Naive thymus-derived CD4-positive, alpha-beta T cell (primary cell): ENCODE measurements at regions of chr14 and their contacts with region 1.

Region 1: GRCh38 chr14:21711360-21711961 is 37.8 kb upstream of the OR4E1 start:
- DNase-seq: peak in 5 of 9 donors; percentile 25 to 57 (median 37)
- ATAC-seq: peak; percentile 80
- H3K4me3 ChIP-seq: no peak overlapping the region
- H3K4me3 Mint-ChIP-seq: peak overlapping the region; percentile 25 to 82 (median 67)
- H3K27ac ChIP-seq: no peak overlapping the region
- H3K27ac Mint-ChIP-seq: peak overlapping the region in 7 of 9 donors; percentile 7 to 91 (median 72)
- H3K4me1 ChIP-seq: no peaks in the 10 kb centered on the region
- H3K4me1 Mint-ChIP-seq: peaks cover 0 to 8% (median 5%) of the 10 kb centered on the region in 7 donors
- H3K27me3 ChIP-seq: peaks cover 0 to 3% of the 10 kb centered on the region in 2 donors
- H3K27me3 Mint-ChIP-seq: peaks cover 9 to 44% (median 23%) of the 10 kb centered on the region in 5 donors

Region 2: GRCh38 chr14:21121106-21121505 is 590.4 kb before region 1 on chr14:
- CTCF ChIA-PET with region 1: no interaction called
- POLR2A ChIA-PET with region 1: no interaction called
- intact Hi-C with region 1: no loop called
- DNase-seq: no peak
- ATAC-seq: no peak
- H3K4me3 ChIP-seq: no peak overlapping the region
- H3K4me3 Mint-ChIP-seq: no peak overlapping the region
- H3K27ac ChIP-seq: no peak overlapping the region
- H3K27ac Mint-ChIP-seq: no peak overlapping the region
- H3K4me1 ChIP-seq: no peaks in the 10 kb centered on the region
- H3K4me1 Mint-ChIP-seq: peaks cover 0 to 4% (median 0%) of the 10 kb centered on the region in 7 donors
- H3K27me3 ChIP-seq: no peaks in the 10 kb centered on the region
- H3K27me3 Mint-ChIP-seq: peaks cover 17 to 33% (median 26%) of the 10 kb centered on the region in 5 donors

Region 3: GRCh38 chr14:21723431-21724045 is 12.1 kb after region 1 on chr14:
- CTCF ChIA-PET with region 1: interaction called, 4 read pairs
- POLR2A ChIA-PET with region 1: interaction called, 5 read pairs
- intact Hi-C with region 1: loop called in 1 of 2 experiments (anchors 1 kb)
- DNase-seq: peak in 5 of 9 donors; percentile 33 to 37 (median 36)
- ATAC-seq: peak; percentile 73
- H3K4me3 ChIP-seq: no peak overlapping the region
- H3K4me3 Mint-ChIP-seq: peak overlapping the region; percentile 33 to 94 (median 76)
- H3K27ac ChIP-seq: peak overlapping the region; percentile 33
- H3K27ac Mint-ChIP-seq: peak overlapping the region in 8 of 9 donors; percentile 15 to 80 (median 72)
- H3K4me1 ChIP-seq: no peaks in the 10 kb centered on the region
- H3K4me1 Mint-ChIP-seq: peaks cover 0 to 3% (median 0%) of the 10 kb centered on the region in 7 donors
- H3K27me3 ChIP-seq: no peaks in the 10 kb centered on the region
- H3K27me3 Mint-ChIP-seq: peaks cover 34 to 38% (median 36%) of the 10 kb centered on the region in 5 donors

Region 4: DNA sequence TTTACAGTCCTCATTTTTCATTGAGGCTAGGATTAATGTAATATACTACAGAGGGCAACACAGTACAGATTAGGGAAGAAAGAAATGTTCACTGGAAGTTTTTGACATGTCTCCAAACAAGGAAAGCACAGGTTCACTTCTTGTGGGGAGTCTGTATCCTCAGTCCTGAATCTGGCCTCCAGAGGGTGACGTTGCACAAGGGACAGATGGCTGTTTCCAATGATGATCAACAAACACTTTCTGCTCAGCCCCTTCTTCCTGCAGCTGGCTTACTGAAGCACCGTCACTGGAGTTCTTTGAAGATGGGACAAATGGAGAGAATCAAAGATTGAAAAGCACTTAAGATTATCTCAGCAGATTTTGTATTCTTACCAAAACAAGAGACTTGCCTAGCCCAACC is 85.5 kb after region 1 on chr14:
- CTCF ChIA-PET with region 1: no interaction called
- POLR2A ChIA-PET with region 1: no interaction called
- intact Hi-C with region 1: no loop called
- DNase-seq: peak in 6 of 9 donors; percentile 5 to 33 (median 23)
- ATAC-seq: peak; percentile 48
- H3K4me3 ChIP-seq: no peak overlapping the region
- H3K4me3 Mint-ChIP-seq: peak overlapping the region in 9 of 10 donors; percentile 22 to 72 (median 61)
- H3K27ac ChIP-seq: no peak overlapping the region
- H3K27ac Mint-ChIP-seq: peak overlapping the region in 7 of 9 donors; percentile 30 to 82 (median 53)
- H3K4me1 ChIP-seq: no peaks in the 10 kb centered on the region
- H3K4me1 Mint-ChIP-seq: peaks cover 0 to 4% (median under 1%) of the 10 kb centered on the region in 7 donors
- H3K27me3 ChIP-seq: no peaks in the 10 kb centered on the region
- H3K27me3 Mint-ChIP-seq: peaks cover 0 to 26% (median 8%) of the 10 kb centered on the region in 5 donors